ENCODE measurements at regions of chr19 and their contacts with region 1.

Region 1: DNA sequence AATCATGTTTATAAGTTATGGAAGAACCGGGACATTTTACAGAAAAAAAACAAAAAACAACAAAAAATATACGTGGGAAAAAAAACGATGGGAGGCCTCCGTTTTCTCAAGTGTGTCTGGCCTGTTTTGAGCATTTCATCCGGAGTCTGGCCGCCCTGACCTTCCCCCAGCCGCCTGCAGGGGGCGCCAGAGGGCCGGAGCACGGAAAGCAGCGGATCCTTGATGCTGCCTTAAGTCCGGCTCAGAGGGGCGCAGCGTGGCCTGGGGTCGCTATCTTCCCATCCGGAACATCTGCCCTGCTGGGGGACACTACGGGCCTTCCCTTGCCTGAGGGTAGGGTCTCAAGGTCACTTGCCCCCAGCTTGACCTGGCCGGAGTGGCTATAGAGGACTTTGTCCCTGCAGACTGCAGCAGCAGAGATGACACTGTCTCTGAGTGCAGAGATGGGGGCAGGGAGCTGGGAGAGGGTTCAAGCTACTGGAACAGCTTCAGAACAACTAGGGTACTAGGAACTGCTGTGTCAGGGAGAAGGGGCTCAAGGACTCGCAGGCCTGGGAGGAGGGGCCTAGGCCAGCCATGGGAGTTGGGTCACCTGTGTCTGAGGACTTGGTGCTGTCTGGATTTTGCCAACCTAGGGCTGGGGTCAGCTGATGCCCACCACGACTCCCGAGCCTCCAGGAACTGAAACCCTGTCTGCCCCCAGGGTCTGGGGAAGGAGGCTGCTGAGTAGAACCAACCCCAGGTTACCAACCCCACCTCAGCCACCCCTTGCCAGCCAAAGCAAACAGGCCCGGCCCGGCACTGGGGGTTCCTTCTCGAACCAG is 1.8 kb upstream of the APOE start:
- DNase-seq: peak; percentile 39 to 82 (median 69)
- ATAC-seq: peak; percentile 75
- H3K4me3 ChIP-seq: no peak overlapping the region
- H3K4me3 Mint-ChIP-seq: no peak overlapping the region
- H3K27ac ChIP-seq: no peak overlapping the region
- H3K27ac Mint-ChIP-seq: no peak overlapping the region
- H3K4me1 ChIP-seq: peaks cover 17% of the 10 kb centered on the region
- H3K4me1 Mint-ChIP-seq: peaks cover 7% of the 10 kb centered on the region
- H3K27me3 ChIP-seq: peaks cover 18 to 31% of the 10 kb centered on the region in 2 experiments
- H3K27me3 Mint-ChIP-seq: peaks cover 30% of the 10 kb centered on the region
- CTCF ChIP-seq: peak; percentile 97

Region 2: GRCh38 chr19:45245334-45245787 is 341.5 kb after region 1 on chr19 and contains the start of gene EXOC3L2:
- CTCF ChIA-PET with region 1: no interaction called
- POLR2A ChIA-PET with region 1: no interaction called
- intact Hi-C with region 1: loop called in 1 of 2 experiments (anchors 5 kb)
- DNase-seq: no peak
- ATAC-seq: no peak
- H3K4me3 ChIP-seq: no peak within 1 kb of the TSS
- H3K4me3 Mint-ChIP-seq: no peak within 1 kb of the TSS
- H3K27ac ChIP-seq: no peak within 1 kb of the TSS
- H3K27ac Mint-ChIP-seq: no peak within 1 kb of the TSS
- H3K4me1 ChIP-seq: peaks cover 15% of the 10 kb centered on the region
- H3K4me1 Mint-ChIP-seq: peaks cover 4% of the 10 kb centered on the region
- H3K27me3 ChIP-seq: no peaks in the 10 kb centered on the region
- H3K27me3 Mint-ChIP-seq: peaks cover 21% of the 10 kb centered on the region
- CTCF ChIP-seq: no peak
- total RNA-seq, gene EXOC3L2: not detected

Region 3: GRCh38 chr19:45340232-45340898 is 436.6 kb after region 1 on chr19 and contains the start of gene KLC3:
- CTCF ChIA-PET with region 1: no interaction called
- POLR2A ChIA-PET with region 1: no interaction called
- intact Hi-C with region 1: loop called in 1 of 2 experiments (anchors 1 kb)
- DNase-seq: peak in 12 of 14 experiments; percentile 7 to 70 (median 35)
- ATAC-seq: peak; percentile 53
- H3K4me3 ChIP-seq: no peak within 1 kb of the TSS
- H3K4me3 Mint-ChIP-seq: no peak within 1 kb of the TSS
- H3K27ac ChIP-seq: no peak within 1 kb of the TSS
- H3K27ac Mint-ChIP-seq: no peak within 1 kb of the TSS
- H3K4me1 ChIP-seq: peaks cover 16% of the 10 kb centered on the region
- H3K4me1 Mint-ChIP-seq: no peaks in the 10 kb centered on the region
- H3K27me3 ChIP-seq: peaks cover 38% of the 10 kb centered on the region in 2 experiments
- H3K27me3 Mint-ChIP-seq: peaks cover 45% of the 10 kb centered on the region
- CTCF ChIP-seq: no peak
- total RNA-seq, gene KLC3: not detected